Head of caudate nucleus (tissue), 42 donors: ENCODE measurements at regions of chr7 and their contacts with region 1.

Region 1: GRCh38 chr7:128455551-128456254 is at the start of gene HILPDA:
- DNase-seq: peak; percentile 74 to 95 (median 92)

Region 2: GRCh38 chr7:128399991-128400390 is 55.7 kb before region 1 on chr7:
- intact Hi-C with region 1: loop called (anchors 2 kb)
- DNase-seq: no peak

Region 3: DNA sequence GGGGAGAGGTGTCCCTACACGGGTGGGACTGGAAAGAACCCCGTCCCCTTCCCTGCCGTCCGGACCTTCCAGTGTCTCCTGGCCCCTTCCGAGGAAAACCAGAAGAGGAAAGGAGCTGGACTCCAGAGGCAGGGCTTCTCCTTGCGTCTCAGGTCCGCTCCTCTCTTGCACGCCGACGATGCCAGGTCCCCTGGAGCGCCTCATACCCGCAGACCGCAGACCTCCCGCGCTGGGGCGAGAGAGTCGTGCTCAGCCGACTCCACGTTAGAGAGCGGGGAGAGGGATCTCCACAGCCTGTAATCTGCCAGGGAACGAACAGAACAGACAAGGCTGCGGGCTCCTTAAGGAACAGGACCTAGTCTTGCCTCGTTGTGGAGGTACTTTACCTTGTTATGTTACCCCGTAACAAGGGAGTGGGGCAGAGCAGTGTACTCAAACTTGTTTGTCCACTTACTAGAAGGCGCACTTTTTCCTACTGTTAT is 45.5 kb before region 1 on chr7:
- intact Hi-C with region 1: no loop called
- DNase-seq: peak in 16 of 42 donors; percentile 30 to 69 (median 54)

Region 4: DNA sequence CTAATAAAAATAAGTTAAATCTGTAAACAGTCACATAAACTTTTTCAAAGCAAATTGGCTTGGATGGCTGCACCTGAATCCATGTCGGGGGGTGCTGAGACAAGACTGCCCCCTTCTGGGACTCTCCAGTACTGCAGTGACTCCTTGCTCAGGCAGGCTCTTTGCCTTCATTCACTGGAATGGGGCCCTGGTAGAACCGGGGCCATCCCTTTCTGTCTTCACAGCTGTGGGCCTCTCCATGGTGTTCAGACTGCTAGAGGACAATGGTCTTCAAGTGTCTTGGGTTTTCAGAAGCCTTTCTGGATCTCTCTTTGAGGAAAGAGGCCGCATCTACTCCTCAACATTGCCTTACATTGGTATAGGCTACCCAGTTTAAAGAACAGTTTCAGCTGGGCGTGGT is 29.9 kb before region 1 on chr7:
- intact Hi-C with region 1: loop called (anchors 1 kb)
- DNase-seq: peak in 41 of 42 donors; percentile 54 to 93 (median 82)

Region 5: DNA sequence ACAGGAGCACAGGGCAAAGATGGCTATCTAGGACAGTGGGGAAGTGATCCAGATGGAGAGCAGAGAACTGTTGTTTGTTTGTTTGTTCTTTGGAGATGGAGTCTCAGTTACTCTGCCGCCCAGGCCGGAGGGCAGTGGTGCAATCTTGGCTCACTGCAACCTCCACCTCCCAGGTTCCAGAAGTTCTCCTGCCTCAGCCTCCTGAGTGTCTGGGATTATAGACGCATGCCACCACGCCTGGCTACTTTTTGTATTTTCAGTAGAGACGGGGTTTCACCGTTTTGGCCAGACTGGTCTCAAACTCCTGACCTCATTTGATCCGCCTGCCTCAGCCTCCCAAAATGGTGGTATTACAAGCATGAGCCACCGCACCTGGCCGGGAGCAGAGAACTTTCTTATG is 41.7 kb after region 1 on chr7:
- intact Hi-C with region 1: no loop called
- DNase-seq: no peak

Region 6: GRCh38 chr7:128530855-128531104 is 75.1 kb after region 1 on chr7:
- intact Hi-C with region 1: loop called (anchors 10 kb)
- DNase-seq: peak in 1 of 42 donors; percentile 63